Activated CD8-positive, alpha-beta T cell treated with anti-CD3 and anti-CD28 coated beads, Interleukin-2, amount 10 ng/mL, durations not matched to agents 7 days and 5 days (primary cell): ENCODE measurements at regions of chr13 and their contacts with region 1.

Region 1: GRCh38 chr13:46552889-46553510 is at the start of gene LRCH1:
- DNase-seq: peak; percentile 93
- ATAC-seq: peak; percentile 90
- H3K4me3 Mint-ChIP-seq: peak within 1 kb of the TSS; percentile 95
- H3K27ac Mint-ChIP-seq: peak within 1 kb of the TSS; percentile 88
- H3K4me1 Mint-ChIP-seq: peaks cover 41% of the 10 kb centered on the region
- H3K27me3 Mint-ChIP-seq: peaks cover 5% of the 10 kb centered on the region
- total RNA-seq, gene LRCH1: 15.3 to 18.0 TPM

Region 2: GRCh38 chr13:46079770-46080169 is 473.2 kb before region 1 on chr13:
- CTCF ChIA-PET with region 1: no interaction called
- POLR2A ChIA-PET with region 1: no interaction called
- DNase-seq: no peak
- ATAC-seq: no peak
- H3K4me3 Mint-ChIP-seq: no peak overlapping the region
- H3K27ac Mint-ChIP-seq: no peak overlapping the region
- H3K4me1 Mint-ChIP-seq: peaks cover 10% of the 10 kb centered on the region
- H3K27me3 Mint-ChIP-seq: peaks cover 11% of the 10 kb centered on the region

Region 3: GRCh38 chr13:46307554-46307953 is 245.4 kb before region 1 on chr13:
- CTCF ChIA-PET with region 1: no interaction called
- POLR2A ChIA-PET with region 1: no interaction called
- DNase-seq: no peak
- ATAC-seq: no peak
- H3K4me3 Mint-ChIP-seq: no peak overlapping the region
- H3K27ac Mint-ChIP-seq: no peak overlapping the region
- H3K4me1 Mint-ChIP-seq: peaks cover 15% of the 10 kb centered on the region
- H3K27me3 Mint-ChIP-seq: no peaks in the 10 kb centered on the region

Region 4: DNA sequence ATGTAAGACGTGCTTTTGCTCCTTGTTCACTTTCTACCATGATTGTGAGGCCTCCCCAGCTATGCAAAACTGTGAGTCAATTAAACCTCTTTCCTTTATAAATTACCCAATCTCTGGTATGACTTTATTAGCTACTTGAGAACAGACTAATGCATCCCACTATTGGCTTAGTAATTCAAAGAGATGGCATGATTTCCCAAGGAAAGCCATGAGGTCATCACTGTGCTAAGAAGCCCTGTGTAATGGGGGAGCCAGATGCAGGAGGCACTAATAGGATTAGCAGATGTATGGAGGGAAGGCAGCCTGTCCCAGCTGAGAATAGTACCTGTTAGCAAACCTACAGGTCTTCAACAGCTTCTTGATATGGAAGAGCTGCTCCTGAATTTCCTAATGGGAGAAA is 204.0 kb before region 1 on chr13:
- CTCF ChIA-PET with region 1: no interaction called
- POLR2A ChIA-PET with region 1: no interaction called
- DNase-seq: no peak
- ATAC-seq: no peak
- H3K4me3 Mint-ChIP-seq: no peak overlapping the region
- H3K27ac Mint-ChIP-seq: no peak overlapping the region
- H3K4me1 Mint-ChIP-seq: no peaks in the 10 kb centered on the region
- H3K27me3 Mint-ChIP-seq: peaks cover 3% of the 10 kb centered on the region

Region 5: GRCh38 chr13:46535829-46536228 is 17.2 kb before region 1 on chr13:
- CTCF ChIA-PET with region 1: interaction called, 22 read pairs
- POLR2A ChIA-PET with region 1: no interaction called
- DNase-seq: no peak
- ATAC-seq: no peak
- H3K4me3 Mint-ChIP-seq: no peak overlapping the region
- H3K27ac Mint-ChIP-seq: no peak overlapping the region
- H3K4me1 Mint-ChIP-seq: peaks cover 2% of the 10 kb centered on the region
- H3K27me3 Mint-ChIP-seq: peaks cover 6% of the 10 kb centered on the region

Region 6: GRCh38 chr13:46571189-46571908 is 18.3 kb after region 1 on chr13:
- CTCF ChIA-PET with region 1: interaction called, 19 read pairs
- POLR2A ChIA-PET with region 1: no interaction called
- DNase-seq: no peak
- ATAC-seq: no peak
- H3K4me3 Mint-ChIP-seq: no peak overlapping the region
- H3K27ac Mint-ChIP-seq: no peak overlapping the region
- H3K4me1 Mint-ChIP-seq: peaks cover 8% of the 10 kb centered on the region
- H3K27me3 Mint-ChIP-seq: no peaks in the 10 kb centered on the region

Region 7: DNA sequence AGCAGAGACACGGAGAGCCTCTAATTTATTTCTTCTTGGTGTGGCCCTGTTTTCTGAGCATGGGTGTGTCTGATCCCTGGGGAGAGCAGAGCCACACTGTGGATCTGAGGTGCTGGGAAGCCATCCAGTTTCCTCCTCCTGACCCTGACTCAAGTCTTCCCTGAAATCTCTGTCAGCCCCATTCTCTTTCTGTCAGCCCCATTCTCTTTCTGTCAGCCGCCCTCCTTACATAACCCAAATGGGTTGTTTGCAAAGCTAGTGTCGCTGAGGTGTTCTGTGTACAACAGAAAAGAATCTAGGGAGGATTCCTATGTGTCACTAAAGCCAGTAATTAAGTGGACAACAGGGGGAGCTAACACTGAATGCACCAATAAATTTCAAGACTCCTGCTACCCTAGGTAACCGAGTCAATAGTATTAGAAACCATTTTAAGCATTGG is 50.2 kb after region 1 on chr13:
- CTCF ChIA-PET with region 1: interaction called, 22 read pairs
- POLR2A ChIA-PET with region 1: no interaction called
- DNase-seq: no peak
- ATAC-seq: no peak
- H3K4me3 Mint-ChIP-seq: no peak overlapping the region
- H3K27ac Mint-ChIP-seq: no peak overlapping the region
- H3K4me1 Mint-ChIP-seq: peaks cover 82% of the 10 kb centered on the region
- H3K27me3 Mint-ChIP-seq: no peaks in the 10 kb centered on the region

Region 8: DNA sequence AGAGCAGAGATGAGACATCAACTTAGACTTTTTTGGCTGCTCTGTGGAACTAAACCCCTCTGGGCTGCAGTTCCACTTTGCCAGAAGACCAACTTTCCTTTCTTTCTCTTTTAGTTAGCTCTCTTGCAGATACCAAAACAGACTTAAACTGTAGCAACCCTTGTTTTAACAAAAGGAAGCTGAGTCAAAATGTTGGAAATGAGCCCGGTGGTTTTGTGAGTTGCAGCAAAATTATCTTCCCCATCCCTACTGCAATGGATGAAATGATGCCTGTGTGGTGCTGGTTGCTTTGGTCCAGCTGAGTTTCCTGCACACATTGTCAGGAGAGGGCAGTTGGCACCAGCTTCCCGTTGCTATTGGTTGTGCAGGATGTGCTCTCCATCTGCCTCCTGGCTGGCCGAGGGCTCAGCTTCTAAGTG is 115.3 kb after region 1 on chr13:
- CTCF ChIA-PET with region 1: interaction called, 19 read pairs
- POLR2A ChIA-PET with region 1: no interaction called
- DNase-seq: no peak
- ATAC-seq: peak; percentile 37
- H3K4me3 Mint-ChIP-seq: peak overlapping the region; percentile 80
- H3K27ac Mint-ChIP-seq: peak overlapping the region; percentile 92
- H3K4me1 Mint-ChIP-seq: peaks cover 43% of the 10 kb centered on the region
- H3K27me3 Mint-ChIP-seq: no peaks in the 10 kb centered on the region

Region 9: DNA sequence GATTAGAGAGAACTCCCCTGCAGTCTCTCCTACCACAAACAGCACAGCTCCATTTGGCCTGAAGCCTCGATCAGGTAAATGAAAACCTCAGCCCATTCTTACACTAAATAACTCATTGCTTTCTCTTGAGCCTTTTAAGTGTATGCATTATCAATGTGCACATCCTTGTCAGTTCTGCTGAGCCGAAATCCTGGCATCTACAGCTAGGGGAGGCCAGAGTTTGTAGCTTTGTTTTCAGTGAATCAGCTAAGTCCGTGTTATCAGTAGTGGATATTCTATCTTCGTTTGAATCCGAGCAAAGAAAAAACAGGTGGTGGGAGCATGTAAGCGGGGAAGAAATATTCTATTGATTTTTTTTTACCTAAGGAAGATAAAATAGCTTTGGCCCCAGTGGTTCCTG is 159.5 kb after region 1 on chr13:
- CTCF ChIA-PET with region 1: interaction called, 36 read pairs
- POLR2A ChIA-PET with region 1: no interaction called
- DNase-seq: no peak
- ATAC-seq: no peak
- H3K4me3 Mint-ChIP-seq: no peak overlapping the region
- H3K27ac Mint-ChIP-seq: no peak overlapping the region
- H3K4me1 Mint-ChIP-seq: no peaks in the 10 kb centered on the region
- H3K27me3 Mint-ChIP-seq: no peaks in the 10 kb centered on the region